Transverse colon (tissue), 4 donors: ENCODE measurements at regions of chr11 and their contacts with region 1.

Region 1: GRCh38 chr11:13343931-13344717 is 66.5 kb downstream of the BMAL1 start:
- DNase-seq: peak; percentile 79
- H3K4me3 ChIP-seq: no peak overlapping the region
- H3K27ac ChIP-seq: no peak overlapping the region
- H3K4me1 ChIP-seq: peaks cover 0 to 14% (median 3%) of the 10 kb centered on the region in 4 donors
- H3K27me3 ChIP-seq: no peaks in the 10 kb centered on the region
- CTCF ChIP-seq: peak; percentile 77 to 84 (median 78)
- EP300 ChIP-seq: no peak
- POLR2A ChIP-seq: no peak

Region 2: DNA sequence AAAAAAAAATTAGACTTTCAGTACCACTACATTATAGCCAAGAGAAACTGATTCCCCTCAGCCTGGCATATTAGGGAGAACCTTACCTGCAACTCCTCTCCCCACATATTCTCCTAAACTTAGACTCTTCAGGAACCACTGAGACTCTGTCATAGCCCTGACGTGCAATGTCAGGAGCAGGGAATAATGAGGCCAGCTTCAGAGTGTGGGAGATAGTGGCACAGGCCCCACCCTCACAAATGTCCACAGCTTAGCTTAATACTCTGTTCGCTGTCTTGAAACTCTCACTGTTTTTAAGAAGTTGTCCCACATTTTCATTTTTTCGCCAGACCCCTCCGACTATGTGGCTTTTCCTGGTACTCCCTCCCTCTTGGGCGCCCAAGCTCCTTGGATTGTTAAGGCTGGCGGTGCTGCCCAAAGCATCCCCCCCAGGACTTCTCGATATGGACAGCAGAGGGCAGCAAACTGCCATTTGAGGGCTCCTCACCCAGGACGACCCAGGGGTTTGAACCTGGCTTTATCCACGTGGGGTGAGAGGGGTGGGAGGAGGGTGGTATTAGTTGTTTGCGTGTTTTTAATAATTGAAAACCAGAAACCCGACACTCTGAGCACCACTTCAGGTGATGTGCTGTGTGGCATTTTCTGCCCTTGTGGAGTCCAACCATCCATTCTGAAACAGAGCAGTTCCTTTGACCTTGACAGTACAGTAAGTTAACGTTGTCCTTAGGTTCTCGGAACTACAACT is 380.2 kb before region 1 on chr11:
- in situ Hi-C with region 1: loop called (anchors 10 to 25 kb)
- intact Hi-C with region 1: loop called (anchors 5 kb)
- DNase-seq: peak; percentile 72
- H3K4me3 ChIP-seq: no peak overlapping the region
- H3K27ac ChIP-seq: no peak overlapping the region
- H3K4me1 ChIP-seq: no peaks in the 10 kb centered on the region
- H3K27me3 ChIP-seq: no peaks in the 10 kb centered on the region
- CTCF ChIP-seq: peak; percentile 83 to 89 (median 86)
- EP300 ChIP-seq: no peak
- POLR2A ChIP-seq: no peak

Region 3: GRCh38 chr11:13008061-13008435 is 336.1 kb before region 1 on chr11:
- in situ Hi-C with region 1: no loop called
- intact Hi-C with region 1: no loop called
- DNase-seq: no peak
- H3K4me3 ChIP-seq: no peak overlapping the region
- H3K27ac ChIP-seq: no peak overlapping the region
- H3K4me1 ChIP-seq: peaks cover 5 to 47% (median 33%) of the 10 kb centered on the region in 4 donors
- H3K27me3 ChIP-seq: peaks cover 73% of the 10 kb centered on the region
- CTCF ChIP-seq: no peak
- EP300 ChIP-seq: no peak
- POLR2A ChIP-seq: no peak

Region 4: GRCh38 chr11:13210424-13210823 is 133.7 kb before region 1 on chr11:
- in situ Hi-C with region 1: loop called in 3 of 4 experiments (anchors 5 to 25 kb)
- intact Hi-C with region 1: loop called (anchors 5 kb)
- DNase-seq: peak; percentile 67
- H3K4me3 ChIP-seq: no peak overlapping the region
- H3K27ac ChIP-seq: no peak overlapping the region
- H3K4me1 ChIP-seq: peaks cover 0 to 17% (median 5%) of the 10 kb centered on the region in 4 donors
- H3K27me3 ChIP-seq: no peaks in the 10 kb centered on the region
- CTCF ChIP-seq: peak; percentile 53 to 79 (median 65)
- EP300 ChIP-seq: no peak
- POLR2A ChIP-seq: no peak

Region 5: GRCh38 chr11:13238879-13239514 is 105.1 kb before region 1 on chr11:
- in situ Hi-C with region 1: loop called in 1 of 4 experiments (anchors 25 kb)
- intact Hi-C with region 1: no loop called
- DNase-seq: peak; percentile 46
- H3K4me3 ChIP-seq: no peak overlapping the region
- H3K27ac ChIP-seq: no peak overlapping the region
- H3K4me1 ChIP-seq: no peaks in the 10 kb centered on the region
- H3K27me3 ChIP-seq: no peaks in the 10 kb centered on the region
- CTCF ChIP-seq: peak; percentile 66 to 86 (median 85)
- EP300 ChIP-seq: no peak
- POLR2A ChIP-seq: no peak